ENCODE measurements at regions of chrX and their contacts with region 1.

Region 1: DNA sequence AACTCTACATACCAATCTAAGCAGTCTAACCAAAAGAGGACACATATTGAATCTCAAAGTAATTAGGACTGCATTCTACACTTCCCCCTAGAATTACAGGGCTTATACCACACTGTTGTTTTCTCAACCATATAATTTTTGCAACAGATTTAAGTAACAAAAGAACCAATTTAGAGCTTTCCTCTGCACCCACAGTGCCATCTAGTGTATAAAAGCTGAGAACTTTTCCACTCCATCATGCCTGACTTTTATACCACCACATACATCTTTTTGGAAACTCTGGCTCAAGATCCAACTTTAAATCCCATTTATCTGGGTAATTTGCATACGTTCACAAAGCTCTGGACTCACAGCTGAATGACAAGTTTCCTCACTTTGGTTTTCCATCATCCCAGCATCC is 99.5 kb downstream of the EFHC2 start:
- DNase-seq: no peak
- H3K4me3 Mint-ChIP-seq: no peak overlapping the region
- H3K27ac Mint-ChIP-seq: no peak overlapping the region
- H3K4me1 Mint-ChIP-seq: peaks cover 14% of the 10 kb centered on the region
- H3K27me3 Mint-ChIP-seq: no peaks in the 10 kb centered on the region

Region 2: DNA sequence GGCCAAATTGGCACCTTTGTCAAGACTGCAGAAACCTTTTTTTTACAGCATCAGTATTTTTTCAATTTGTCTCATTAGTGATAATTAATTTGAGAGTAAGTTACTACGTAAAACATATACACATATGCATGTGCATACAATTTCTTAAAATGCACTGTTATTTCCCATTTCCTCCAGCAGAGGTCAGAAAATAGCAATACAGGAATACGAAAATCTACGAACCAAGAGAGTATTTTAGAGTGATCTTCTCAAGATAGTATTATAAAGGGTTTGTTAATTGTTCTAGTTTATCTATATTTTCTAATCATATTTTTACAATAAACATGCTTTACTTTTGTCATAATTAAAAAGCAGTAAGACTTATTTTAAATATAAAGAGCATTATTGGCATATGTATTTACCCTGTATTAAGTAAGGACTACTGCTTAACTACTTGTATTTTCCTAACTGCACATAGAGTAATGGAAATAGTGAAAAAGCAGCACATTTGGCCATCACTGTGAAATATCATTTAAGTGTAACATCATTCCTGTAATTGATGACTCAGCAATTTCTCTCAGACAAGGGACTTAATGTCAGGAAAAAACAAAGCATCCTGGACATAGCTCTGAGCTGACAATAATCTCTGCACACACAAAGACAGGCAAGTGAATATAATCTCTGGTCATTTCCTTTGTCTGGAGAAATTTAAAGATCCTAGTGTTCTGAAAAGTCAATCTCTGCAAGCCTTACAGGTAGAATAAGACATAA is 407.4 kb before region 1 on chrX:
- CTCF ChIA-PET with region 1: interaction called, 4 read pairs
- POLR2A ChIA-PET with region 1: no interaction called
- intact Hi-C with region 1: loop called (anchors 5 kb)
- DNase-seq: no peak
- H3K4me3 Mint-ChIP-seq: no peak overlapping the region
- H3K27ac Mint-ChIP-seq: no peak overlapping the region
- H3K4me1 Mint-ChIP-seq: no peaks in the 10 kb centered on the region
- H3K27me3 Mint-ChIP-seq: peaks cover 2% of the 10 kb centered on the region

Measured in activated CD4-positive, alpha-beta memory T cell treated with anti-CD3 and anti-CD28 coated beads for 36 hours (primary cell).